ENCODE measurements at regions of chr19 and their contacts with region 1.

Region 1: DNA sequence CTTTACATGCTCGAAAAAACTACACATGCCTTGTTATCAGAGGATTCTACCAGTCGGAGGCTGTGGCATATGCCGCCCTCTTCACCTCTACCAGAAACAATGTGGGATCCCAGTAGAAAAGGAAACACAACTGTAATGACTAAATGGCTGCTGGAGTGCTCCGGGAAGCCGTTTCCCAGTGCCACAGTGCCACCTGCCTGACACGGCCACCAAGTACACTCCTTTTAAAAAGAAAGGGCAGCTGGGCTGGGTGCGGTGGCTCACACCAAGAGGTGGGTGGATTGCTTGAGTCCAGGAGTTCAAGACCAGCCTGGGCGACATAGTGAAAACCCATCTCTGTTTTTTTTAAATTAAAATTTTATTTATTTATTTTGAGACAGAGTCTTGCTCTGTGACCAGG is 67.3 kb downstream of the TRPM4 start:
- DNase-seq: peak in 1 of 2 donors; percentile 31
- ATAC-seq: peak; percentile 59 to 82 (median 73)
- H3K4me3 ChIP-seq: no peak overlapping the region
- H3K27ac ChIP-seq: no peak overlapping the region
- H3K4me1 ChIP-seq: peaks cover 0 to 7% (median 0%) of the 10 kb centered on the region in 9 donors
- H3K27me3 ChIP-seq: no peaks in the 10 kb centered on the region
- CTCF ChIP-seq: peak; percentile 13 to 58 (median 42)

Region 2: GRCh38 chr19:49301165-49301865 is 76.5 kb after region 1 on chr19:
- intact Hi-C with region 1: loop called in 7 of 10 experiments (anchors 1 to 10 kb)
- DNase-seq: peak; percentile 58 to 83
- ATAC-seq: peak; percentile 89 to 96 (median 92)
- H3K4me3 ChIP-seq: peak overlapping the region in 4 of 10 donors; percentile 24 to 32 (median 26)
- H3K27ac ChIP-seq: no peak overlapping the region
- H3K4me1 ChIP-seq: peaks cover 0 to 5% (median 0%) of the 10 kb centered on the region in 9 donors
- H3K27me3 ChIP-seq: no peaks in the 10 kb centered on the region
- CTCF ChIP-seq: peak; percentile 65 to 96 (median 83)

Region 3: GRCh38 chr19:49327878-49328544 is 103.2 kb after region 1 on chr19:
- intact Hi-C with region 1: loop called in 1 of 10 experiments (anchors 10 kb)
- DNase-seq: no peak
- ATAC-seq: peak in 1 of 8 donors; percentile 20
- H3K4me3 ChIP-seq: no peak overlapping the region
- H3K27ac ChIP-seq: no peak overlapping the region
- H3K4me1 ChIP-seq: peaks cover 0 to 18% (median 0%) of the 10 kb centered on the region in 9 donors
- H3K27me3 ChIP-seq: no peaks in the 10 kb centered on the region
- CTCF ChIP-seq: peak; percentile 26 to 79 (median 61)

Region 4: DNA sequence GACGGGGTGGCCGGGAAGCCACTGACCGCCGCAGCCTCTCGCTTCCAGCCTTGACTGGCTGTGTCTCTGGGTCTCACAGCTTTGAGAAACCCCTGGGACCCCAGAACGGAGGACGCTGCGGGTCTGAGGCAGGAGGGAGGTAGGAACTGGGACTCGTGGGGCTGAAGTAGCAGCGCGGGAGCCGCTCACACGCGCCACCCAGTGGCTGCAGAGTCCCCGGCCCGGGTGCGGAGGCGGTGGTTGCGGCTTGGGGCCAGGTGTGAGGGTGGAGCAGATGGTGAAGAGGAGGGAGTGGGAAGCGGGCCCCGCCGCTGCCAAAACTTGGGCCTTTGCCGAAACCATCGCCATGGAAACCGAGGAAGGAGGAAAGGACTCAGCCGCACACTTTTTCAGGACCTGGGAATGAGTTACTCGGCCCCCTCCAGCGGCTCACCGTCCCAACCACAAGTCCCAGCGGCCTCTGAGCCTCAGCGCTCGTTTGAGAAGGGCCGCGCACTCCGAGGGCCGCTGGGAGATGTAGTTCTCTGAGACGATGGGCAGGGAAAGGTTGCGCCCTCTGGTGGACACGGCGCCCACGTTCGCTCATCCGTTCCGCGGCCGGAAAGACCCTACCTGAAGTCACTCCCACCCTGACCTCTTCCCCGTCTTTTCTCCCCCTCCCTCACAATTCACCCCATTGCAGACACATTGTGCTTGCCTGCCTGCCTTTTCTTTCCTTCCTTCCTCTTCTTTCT is 218.7 kb after region 1 on chr19:
- intact Hi-C with region 1: loop called in 6 of 10 experiments (anchors 2 to 10 kb)
- DNase-seq: peak; percentile 94 to 96
- ATAC-seq: peak; percentile 86 to 95 (median 93)
- H3K4me3 ChIP-seq: peak overlapping the region; percentile 60 to 93 (median 69)
- H3K27ac ChIP-seq: peak overlapping the region; percentile 55 to 92 (median 86)
- H3K4me1 ChIP-seq: peaks cover 0 to 23% (median 6%) of the 10 kb centered on the region in 9 donors
- H3K27me3 ChIP-seq: peaks cover 8 to 40% (median 36%) of the 10 kb centered on the region in 7 donors
- CTCF ChIP-seq: peak; percentile 65 to 89 (median 80)

Region 5: DNA sequence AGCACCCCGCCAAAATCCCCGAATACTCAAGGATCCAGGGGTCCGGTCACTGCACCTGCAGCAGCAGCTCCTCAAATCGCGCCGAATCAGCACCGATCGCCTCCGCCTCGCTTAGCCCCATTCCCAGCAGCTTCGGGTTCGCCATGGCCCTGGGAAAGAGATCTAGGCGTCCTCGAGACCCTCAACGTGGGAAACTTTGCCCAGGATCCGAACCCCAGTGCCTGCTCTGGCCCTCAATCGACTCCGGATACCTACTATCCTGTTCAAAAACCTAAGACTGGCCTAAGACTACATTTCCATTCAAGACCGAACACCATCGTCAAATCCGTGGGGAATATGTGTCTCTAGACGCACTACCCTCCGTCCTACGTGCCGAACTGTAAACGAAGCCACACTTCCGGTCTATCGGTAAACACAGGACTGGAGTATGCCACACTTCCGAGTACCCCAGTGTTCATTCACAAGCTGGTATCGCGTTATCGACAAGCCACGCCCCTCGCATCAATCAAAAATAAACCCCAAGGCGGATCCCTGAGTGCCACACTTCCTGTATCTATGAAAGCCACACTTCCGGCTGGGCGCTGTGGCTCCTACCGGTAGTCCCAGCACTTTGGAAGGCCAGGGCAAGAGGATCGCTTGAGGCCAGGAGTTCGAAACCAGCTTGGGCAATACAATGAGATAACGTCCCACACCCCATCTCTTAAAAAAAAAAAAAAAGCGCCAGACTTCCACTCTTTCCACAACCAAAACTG is 226.8 kb after region 1 on chr19 and contains the start of gene PIH1D1:
- intact Hi-C with region 1: loop called in 4 of 10 experiments (anchors 5 to 10 kb)
- DNase-seq: peak; percentile 91 to 99
- ATAC-seq: peak; percentile 55 to 86 (median 84)
- H3K4me3 ChIP-seq: peak within 1 kb of the TSS; percentile 40 to 91 (median 64)
- H3K27ac ChIP-seq: peak within 1 kb of the TSS; percentile 85 to 96 (median 92)
- H3K4me1 ChIP-seq: peaks cover 0 to 53% (median 21%) of the 10 kb centered on the region in 9 donors
- H3K27me3 ChIP-seq: no peaks in the 10 kb centered on the region
- CTCF ChIP-seq: peak in 3 of 9 donors; percentile 10 to 33 (median 10)
- total RNA-seq, gene PIH1D1: 15.7 to 42.1 (median 25.7) TPM

Measured in heart right ventricle (tissue), 16 donors.